WTC11 (cell line): ENCODE measurements at regions of chr6 and their contacts with region 1.

Region 1: DNA sequence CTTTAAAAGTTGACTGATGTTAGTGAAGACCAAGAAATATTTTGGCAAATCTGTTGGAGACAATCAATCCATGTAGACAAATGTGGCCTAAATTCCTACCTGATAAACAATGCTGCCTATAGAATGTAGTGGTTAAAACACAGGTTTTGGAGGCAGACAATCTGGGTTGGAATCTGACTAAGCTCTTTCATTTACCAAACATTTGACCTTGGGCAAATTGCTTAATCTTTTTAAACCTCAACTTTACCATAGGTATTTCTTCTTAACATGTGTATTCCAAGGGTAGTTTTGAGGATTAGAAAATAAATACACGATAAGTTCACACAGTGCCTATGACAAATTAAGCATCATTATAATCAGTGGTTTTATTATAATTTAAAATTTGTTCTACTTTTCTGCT is 11.5 kb downstream of the RHAG start:
- DNase-seq: no peak
- ATAC-seq: no peak
- H3K4me3 Mint-ChIP-seq: no peak overlapping the region
- H3K27ac Mint-ChIP-seq: no peak overlapping the region
- H3K4me1 Mint-ChIP-seq: no peaks in the 10 kb centered on the region
- H3K27me3 Mint-ChIP-seq: no peaks in the 10 kb centered on the region
- CTCF ChIP-seq: no peak

Region 2: DNA sequence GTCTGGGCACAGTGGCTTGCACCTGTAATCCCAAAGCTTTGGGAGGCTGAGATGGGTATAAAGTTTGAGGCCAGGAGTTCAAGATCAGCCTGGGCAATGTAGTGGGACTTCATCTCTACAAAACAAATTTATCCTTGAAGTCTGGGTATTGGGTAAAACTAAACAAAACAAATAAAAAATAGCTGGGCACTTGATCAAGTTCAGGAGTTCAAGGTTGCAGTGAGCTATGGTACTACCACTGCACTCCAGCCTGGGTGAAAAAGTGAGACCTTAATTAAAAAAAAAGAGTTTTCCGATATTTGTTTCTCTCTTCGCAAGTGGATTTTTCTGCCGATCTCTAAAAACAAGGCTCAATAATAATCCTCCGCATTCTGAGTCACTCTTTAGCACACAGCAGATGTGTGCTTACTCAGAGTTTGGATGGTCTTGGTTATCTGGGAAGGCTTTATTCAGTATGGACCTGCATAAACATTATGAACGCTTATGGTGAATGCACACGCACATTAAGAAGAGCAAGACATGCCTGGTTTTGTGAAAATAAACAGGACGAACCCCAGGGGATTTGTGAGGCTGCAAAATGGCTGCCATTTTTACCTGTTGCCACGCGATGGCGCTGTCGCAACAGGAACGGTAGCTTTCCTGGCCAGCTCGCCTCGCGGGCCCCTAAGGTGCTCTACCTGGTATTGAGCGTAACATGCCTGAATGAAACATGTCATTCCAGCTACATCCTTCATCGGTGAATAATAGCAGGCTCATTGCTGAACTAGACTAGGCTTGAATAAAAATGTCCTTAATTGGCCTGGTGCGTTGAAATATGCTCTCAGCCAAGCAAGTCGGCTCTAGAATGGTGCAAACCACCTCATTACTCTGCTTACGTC is 1837.3 kb before region 1 on chr6:
- CTCF ChIA-PET with region 1: no interaction called
- POLR2A ChIA-PET with region 1: no interaction called
- DNase-seq: peak; percentile 71
- ATAC-seq: peak; percentile 74
- H3K4me3 Mint-ChIP-seq: no peak overlapping the region
- H3K27ac Mint-ChIP-seq: no peak overlapping the region
- H3K4me1 Mint-ChIP-seq: peaks cover 28% of the 10 kb centered on the region
- H3K27me3 Mint-ChIP-seq: peaks cover 81% of the 10 kb centered on the region
- CTCF ChIP-seq: peak; percentile 93

Region 3: DNA sequence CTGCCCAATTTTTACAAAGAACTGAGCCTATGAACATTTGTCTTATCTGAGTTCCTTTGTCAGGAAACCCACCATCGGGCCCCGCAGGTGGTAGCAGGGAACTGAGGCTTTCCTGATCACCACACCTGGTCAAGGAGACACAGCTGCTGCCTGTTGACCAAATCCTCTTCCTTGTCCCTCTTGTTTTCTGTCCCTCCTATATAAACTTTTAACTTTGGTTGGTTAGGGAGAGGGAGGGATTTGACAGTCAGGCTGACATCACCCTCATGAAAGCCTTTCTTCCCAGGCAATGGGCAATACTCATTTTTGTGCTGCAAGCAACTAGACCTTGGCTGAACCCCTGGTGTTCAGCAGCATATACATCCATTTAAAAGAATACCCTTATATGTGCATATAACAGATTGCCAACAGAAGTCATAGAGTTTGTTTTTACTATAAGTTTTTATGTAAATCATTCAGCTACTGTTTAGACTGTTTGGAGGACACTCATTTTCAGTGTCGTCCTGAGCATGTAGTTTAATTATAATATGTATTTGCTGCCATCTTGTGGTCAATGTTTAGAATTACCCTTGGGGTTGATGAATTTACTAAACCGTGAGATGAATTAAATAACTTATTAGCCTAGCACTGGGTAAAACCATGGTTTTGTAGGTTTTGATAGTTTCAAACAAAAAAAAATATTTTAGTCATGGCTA is 224.2 kb after region 1 on chr6:
- CTCF ChIA-PET with region 1: interaction called, 20 read pairs
- POLR2A ChIA-PET with region 1: no interaction called
- DNase-seq: no peak
- ATAC-seq: peak; percentile 73
- H3K4me3 Mint-ChIP-seq: no peak overlapping the region
- H3K27ac Mint-ChIP-seq: no peak overlapping the region
- H3K4me1 Mint-ChIP-seq: peaks cover 4% of the 10 kb centered on the region
- H3K27me3 Mint-ChIP-seq: no peaks in the 10 kb centered on the region
- CTCF ChIP-seq: peak; percentile 63; the same call in 1 of the 2 replicates